AG04449 (cell line): ENCODE measurements at regions of chr12 and their contacts with region 1.

Region 1: DNA sequence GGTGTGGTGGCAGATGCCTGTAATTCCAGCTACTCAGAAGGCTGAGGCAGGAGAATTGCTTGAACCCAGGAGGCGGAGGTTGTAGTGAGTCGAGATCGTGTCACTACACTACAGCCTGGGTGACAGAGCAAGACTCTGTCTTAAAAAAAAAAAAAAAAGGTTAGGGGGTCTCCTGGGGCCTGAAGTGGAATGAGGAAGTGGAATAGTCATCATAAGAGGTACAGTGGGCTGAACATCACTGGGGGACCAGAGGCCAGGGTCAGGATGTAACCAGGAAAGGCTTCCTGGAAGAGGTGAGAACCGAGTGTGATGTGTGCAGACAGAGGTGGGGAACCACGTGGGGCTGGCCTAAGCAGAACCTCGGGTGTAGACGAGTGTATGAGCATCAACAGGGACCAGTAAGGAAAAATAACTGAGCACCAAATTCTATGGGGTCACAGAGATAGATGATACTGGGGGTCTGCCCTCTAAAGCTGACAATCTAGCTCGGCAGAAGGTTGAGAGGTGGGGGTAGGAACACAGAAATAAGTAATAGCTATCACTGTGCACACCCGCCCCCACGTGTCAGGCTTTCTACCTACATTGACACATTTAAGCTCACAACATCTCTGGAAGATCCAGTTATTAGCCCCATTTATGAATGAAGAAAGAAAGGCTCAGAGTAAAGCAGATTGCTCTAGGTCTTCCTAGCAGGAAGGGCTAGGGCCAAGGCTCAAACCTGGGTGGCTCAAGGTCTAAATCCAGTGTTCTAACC is 5.0 kb upstream of the COX6A1 start:
- DNase-seq: no peak
- H3K4me3 ChIP-seq: no peak overlapping the region
- CTCF ChIP-seq: no peak

Region 2: GRCh38 chr12:120327593-120327992 is 105.4 kb before region 1 on chr12 and contains the start of gene PLA2G1B:
- CTCF ChIA-PET with region 1: interaction called, 17 read pairs
- POLR2A ChIA-PET with region 1: no interaction called
- DNase-seq: no peak
- H3K4me3 ChIP-seq: no peak within 1 kb of the TSS
- CTCF ChIP-seq: no peak

Region 3: GRCh38 chr12:120356567-120357030 is 76.3 kb before region 1 on chr12:
- CTCF ChIA-PET with region 1: interaction called, 160 read pairs
- POLR2A ChIA-PET with region 1: no interaction called
- DNase-seq: peak; percentile 42
- H3K4me3 ChIP-seq: no peak overlapping the region
- CTCF ChIP-seq: peak; percentile 83

Region 4: DNA sequence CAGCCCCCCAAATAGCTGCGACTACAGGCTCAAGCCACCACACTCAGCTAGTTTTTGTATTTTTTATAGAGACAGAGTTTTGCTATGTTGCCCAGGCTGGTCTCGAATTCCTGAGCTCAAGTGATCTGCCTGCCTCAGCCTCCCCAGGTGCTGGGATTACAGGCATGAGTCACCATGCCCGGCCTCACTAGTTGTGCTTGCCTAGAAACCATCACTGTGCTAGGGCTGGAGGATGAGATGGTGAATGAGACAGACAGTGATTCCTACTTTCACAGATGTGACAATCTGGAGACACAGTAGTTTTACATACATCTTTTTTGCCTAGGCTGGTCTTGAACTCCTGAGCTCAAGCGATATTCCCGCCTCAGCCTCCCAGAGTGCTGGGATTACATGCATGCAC is 56.5 kb before region 1 on chr12:
- CTCF ChIA-PET with region 1: interaction called, 15 read pairs
- POLR2A ChIA-PET with region 1: no interaction called
- DNase-seq: no peak
- H3K4me3 ChIP-seq: no peak overlapping the region
- CTCF ChIP-seq: no peak

Region 5: DNA sequence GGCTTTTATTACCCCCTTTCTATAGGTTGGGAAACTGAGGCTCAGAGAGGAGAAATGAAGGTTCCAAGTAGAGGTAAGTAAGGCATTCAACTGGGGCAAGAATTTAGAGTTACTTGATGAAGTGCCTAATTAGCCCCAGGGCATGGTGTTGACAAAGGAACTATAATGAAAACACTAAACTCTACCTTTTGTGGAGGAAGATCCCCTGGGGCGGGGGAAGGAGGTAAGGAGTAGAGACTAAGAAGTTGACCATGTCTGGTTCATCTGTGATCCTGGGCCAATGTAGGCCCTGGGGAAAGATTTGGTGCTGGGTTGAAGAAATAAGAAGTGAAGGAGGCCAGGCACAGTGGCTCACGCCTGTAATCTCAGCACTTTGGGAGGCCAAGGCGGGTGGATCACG is 11.2 kb before region 1 on chr12:
- CTCF ChIA-PET with region 1: interaction called, 31 read pairs
- POLR2A ChIA-PET with region 1: no interaction called
- DNase-seq: no peak
- H3K4me3 ChIP-seq: no peak overlapping the region
- CTCF ChIP-seq: no peak